PC-9 (cell line): ENCODE measurements at regions of chr9 and their contacts with region 1.

Region 1: GRCh38 chr9:94950579-94951323 is 224.3 kb downstream of the AOPEP start:
- DNase-seq: peak; percentile 89 to 100
- H3K4me3 ChIP-seq: peak overlapping the region; percentile 5; the same call in 1 of the 2 replicates
- H3K27ac ChIP-seq: peak overlapping the region; percentile 91
- H3K4me1 ChIP-seq: peaks cover 85% of the 10 kb centered on the region
- H3K27me3 ChIP-seq: no peaks in the 10 kb centered on the region
- CTCF ChIP-seq: no peak

Region 2: GRCh38 chr9:94805585-94805984 is 145.2 kb before region 1 on chr9:
- CTCF ChIA-PET with region 1: no interaction called
- POLR2A ChIA-PET with region 1: interaction called, 7 read pairs
- intact Hi-C with region 1: loop called (anchors 2 kb)
- DNase-seq: peak; percentile 69 to 100
- H3K4me3 ChIP-seq: peak overlapping the region; percentile 0; the same call in 1 of the 2 replicates
- H3K27ac ChIP-seq: peak overlapping the region; percentile 94
- H3K4me1 ChIP-seq: peaks cover 54% of the 10 kb centered on the region
- H3K27me3 ChIP-seq: no peaks in the 10 kb centered on the region
- CTCF ChIP-seq: no peak

Region 3: GRCh38 chr9:94839398-94839797 is 111.4 kb before region 1 on chr9:
- CTCF ChIA-PET with region 1: no interaction called
- POLR2A ChIA-PET with region 1: no interaction called
- intact Hi-C with region 1: no loop called
- DNase-seq: no peak
- H3K4me3 ChIP-seq: no peak overlapping the region
- H3K27ac ChIP-seq: no peak overlapping the region
- H3K4me1 ChIP-seq: no peaks in the 10 kb centered on the region
- H3K27me3 ChIP-seq: no peaks in the 10 kb centered on the region
- CTCF ChIP-seq: no peak

Region 4: GRCh38 chr9:94912700-94913249 is 38.0 kb before region 1 on chr9:
- CTCF ChIA-PET with region 1: no interaction called
- POLR2A ChIA-PET with region 1: interaction called, 26 read pairs
- intact Hi-C with region 1: loop called (anchors 1 kb)
- DNase-seq: peak; percentile 79 to 94
- H3K4me3 ChIP-seq: no peak overlapping the region
- H3K27ac ChIP-seq: peak overlapping the region; percentile 97
- H3K4me1 ChIP-seq: peaks cover 68% of the 10 kb centered on the region
- H3K27me3 ChIP-seq: no peaks in the 10 kb centered on the region
- CTCF ChIP-seq: no peak

Region 5: GRCh38 chr9:94929373-94929764 is 21.4 kb before region 1 on chr9:
- CTCF ChIA-PET with region 1: no interaction called
- POLR2A ChIA-PET with region 1: interaction called, 7 read pairs
- intact Hi-C with region 1: loop called (anchors 1 kb)
- DNase-seq: peak in 1 of 2 experiments; percentile 89
- H3K4me3 ChIP-seq: no peak overlapping the region
- H3K27ac ChIP-seq: no peak overlapping the region
- H3K4me1 ChIP-seq: peaks cover 26% of the 10 kb centered on the region
- H3K27me3 ChIP-seq: no peaks in the 10 kb centered on the region
- CTCF ChIP-seq: no peak

Region 6: GRCh38 chr9:94980947-94981722 is 30.4 kb after region 1 on chr9:
- CTCF ChIA-PET with region 1: no interaction called
- POLR2A ChIA-PET with region 1: no interaction called
- intact Hi-C with region 1: no loop called
- DNase-seq: no peak
- H3K4me3 ChIP-seq: no peak overlapping the region
- H3K27ac ChIP-seq: no peak overlapping the region
- H3K4me1 ChIP-seq: no peaks in the 10 kb centered on the region
- H3K27me3 ChIP-seq: no peaks in the 10 kb centered on the region
- CTCF ChIP-seq: no peak

Region 7: DNA sequence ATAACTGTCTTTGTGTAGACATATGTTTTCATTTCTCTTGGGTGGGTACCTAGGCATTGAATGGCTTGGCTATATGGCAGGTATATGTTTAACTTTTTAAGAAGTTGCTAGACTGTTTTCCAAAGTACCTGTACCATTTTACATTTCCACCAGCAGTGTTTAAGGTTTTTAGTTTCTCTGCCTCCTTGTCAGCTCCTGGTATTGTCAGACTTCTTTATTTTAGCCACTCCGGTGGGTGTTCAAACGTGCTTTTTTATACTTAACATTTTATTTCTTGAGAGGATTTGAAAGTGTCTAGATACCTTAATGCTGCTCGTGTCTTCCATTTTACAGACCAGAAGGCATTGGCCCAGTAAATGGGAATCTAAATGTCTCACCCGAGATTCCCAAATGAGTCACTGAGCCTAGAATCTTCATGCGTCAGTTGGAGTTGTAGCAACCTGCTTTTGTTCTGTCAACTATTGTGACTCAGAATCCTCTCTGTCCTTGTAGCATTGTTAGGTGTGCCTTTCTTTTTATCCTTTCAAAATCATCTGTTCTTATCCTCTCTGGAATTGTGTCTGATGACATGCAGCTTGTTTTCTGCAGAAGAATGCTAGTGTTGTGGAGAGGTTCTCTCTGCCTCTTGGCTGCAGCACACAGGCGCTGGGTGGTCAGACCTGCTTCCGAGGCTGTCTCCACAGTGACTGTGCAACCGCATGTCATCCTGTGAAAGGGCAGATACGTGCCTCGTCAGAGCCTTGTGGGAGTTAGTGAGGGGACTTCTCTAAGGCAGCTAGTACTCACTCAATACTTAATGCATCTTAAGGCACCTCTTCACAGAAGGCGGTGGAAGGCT is 67.6 kb after region 1 on chr9:
- CTCF ChIA-PET with region 1: no interaction called
- POLR2A ChIA-PET with region 1: no interaction called
- intact Hi-C with region 1: loop called (anchors 1 kb)
- DNase-seq: peak in 1 of 2 experiments; percentile 77
- H3K4me3 ChIP-seq: no peak overlapping the region
- H3K27ac ChIP-seq: peak overlapping the region; percentile 38
- H3K4me1 ChIP-seq: peaks cover 12% of the 10 kb centered on the region; the same call in 1 of the 2 replicates
- H3K27me3 ChIP-seq: no peaks in the 10 kb centered on the region
- CTCF ChIP-seq: no peak